Activated CD4-positive, alpha-beta memory T cell treated with anti-CD3 and anti-CD28 coated beads for 36 hours (primary cell): ENCODE measurements at regions of chrX and their contacts with region 1.

Region 1: GRCh38 chrX:110450050-110450449 is 91.4 kb downstream of the RTL9 start:
- DNase-seq: peak; percentile 65
- H3K4me3 Mint-ChIP-seq: no peak overlapping the region
- H3K27ac Mint-ChIP-seq: no peak overlapping the region
- H3K4me1 Mint-ChIP-seq: no peaks in the 10 kb centered on the region
- H3K27me3 Mint-ChIP-seq: peaks cover 5% of the 10 kb centered on the region

Region 2: DNA sequence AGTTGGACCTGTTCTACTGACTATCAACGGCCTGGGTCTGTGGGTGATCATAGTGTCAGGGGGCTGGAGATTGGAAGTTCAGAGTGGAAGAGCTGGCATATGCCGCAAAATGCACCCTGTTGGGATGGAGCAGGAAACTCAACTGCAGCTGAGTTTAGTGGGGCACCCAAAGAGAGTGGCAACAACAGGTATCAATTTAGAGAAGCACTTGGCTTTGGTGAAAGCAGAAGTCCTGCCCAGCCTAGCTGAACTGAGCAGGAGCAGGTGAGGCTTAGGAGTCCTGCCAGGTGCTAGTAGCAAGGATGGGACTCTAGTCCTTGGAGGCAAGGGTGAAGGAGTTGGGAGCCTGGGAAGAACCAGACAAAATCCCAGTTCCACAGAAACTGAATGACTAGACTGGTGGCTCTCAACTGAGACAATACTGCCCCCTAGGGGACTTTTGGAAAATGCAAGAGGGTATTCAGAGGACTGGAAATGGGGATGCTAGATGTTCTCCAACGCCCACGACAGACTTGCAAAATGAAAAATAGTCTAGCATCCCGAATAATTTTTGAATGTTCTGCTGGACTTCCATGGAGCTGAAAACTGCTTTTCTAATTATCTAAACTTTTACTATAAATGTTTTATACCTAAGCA is 42.0 kb before region 1 on chrX:
- CTCF ChIA-PET with region 1: no interaction called
- POLR2A ChIA-PET with region 1: no interaction called
- intact Hi-C with region 1: no loop called
- DNase-seq: peak; percentile 31
- H3K4me3 Mint-ChIP-seq: no peak overlapping the region
- H3K27ac Mint-ChIP-seq: no peak overlapping the region
- H3K4me1 Mint-ChIP-seq: peaks cover 3% of the 10 kb centered on the region
- H3K27me3 Mint-ChIP-seq: no peaks in the 10 kb centered on the region

Region 3: DNA sequence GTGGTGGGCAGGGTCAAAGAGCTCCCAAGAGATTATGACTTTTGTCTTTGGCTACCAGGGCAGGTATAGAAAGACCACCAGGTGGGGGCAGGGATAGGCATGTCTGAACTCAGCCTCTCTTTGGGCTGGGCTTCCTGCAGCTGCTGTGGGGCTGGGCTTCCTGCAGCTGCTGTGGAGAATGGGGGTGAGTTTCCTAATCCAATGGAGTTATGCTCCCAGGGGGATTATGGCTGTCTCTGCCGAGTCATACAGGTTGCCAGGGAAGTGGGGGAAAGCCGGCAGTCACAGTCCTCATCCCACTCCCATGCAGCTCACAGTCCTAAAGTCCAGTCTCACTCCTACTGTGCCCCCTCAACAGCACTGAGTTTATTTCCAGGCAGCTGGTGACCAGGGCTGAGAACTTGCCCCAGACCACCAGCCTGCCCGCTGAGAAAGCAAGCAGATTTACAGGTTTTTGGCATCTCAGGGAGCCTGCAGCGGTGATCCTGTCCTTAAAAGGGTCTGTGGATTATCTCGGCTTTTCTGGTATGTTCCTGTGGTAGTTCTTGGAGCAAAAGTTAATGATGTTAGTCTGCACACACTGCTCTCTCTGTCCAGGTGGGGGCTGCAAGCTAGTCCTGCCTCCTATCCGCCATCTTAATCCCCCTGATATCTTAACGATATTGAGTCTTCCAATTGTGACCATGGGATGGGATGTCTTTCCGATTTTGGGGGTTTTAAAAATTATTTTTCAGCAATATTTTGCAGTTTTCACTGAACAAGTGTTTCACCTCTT is 42.0 kb after region 1 on chrX:
- CTCF ChIA-PET with region 1: no interaction called
- POLR2A ChIA-PET with region 1: no interaction called
- intact Hi-C with region 1: no loop called
- DNase-seq: no peak
- H3K4me3 Mint-ChIP-seq: no peak overlapping the region
- H3K27ac Mint-ChIP-seq: no peak overlapping the region
- H3K4me1 Mint-ChIP-seq: no peaks in the 10 kb centered on the region
- H3K27me3 Mint-ChIP-seq: peaks cover 6% of the 10 kb centered on the region

Region 4: DNA sequence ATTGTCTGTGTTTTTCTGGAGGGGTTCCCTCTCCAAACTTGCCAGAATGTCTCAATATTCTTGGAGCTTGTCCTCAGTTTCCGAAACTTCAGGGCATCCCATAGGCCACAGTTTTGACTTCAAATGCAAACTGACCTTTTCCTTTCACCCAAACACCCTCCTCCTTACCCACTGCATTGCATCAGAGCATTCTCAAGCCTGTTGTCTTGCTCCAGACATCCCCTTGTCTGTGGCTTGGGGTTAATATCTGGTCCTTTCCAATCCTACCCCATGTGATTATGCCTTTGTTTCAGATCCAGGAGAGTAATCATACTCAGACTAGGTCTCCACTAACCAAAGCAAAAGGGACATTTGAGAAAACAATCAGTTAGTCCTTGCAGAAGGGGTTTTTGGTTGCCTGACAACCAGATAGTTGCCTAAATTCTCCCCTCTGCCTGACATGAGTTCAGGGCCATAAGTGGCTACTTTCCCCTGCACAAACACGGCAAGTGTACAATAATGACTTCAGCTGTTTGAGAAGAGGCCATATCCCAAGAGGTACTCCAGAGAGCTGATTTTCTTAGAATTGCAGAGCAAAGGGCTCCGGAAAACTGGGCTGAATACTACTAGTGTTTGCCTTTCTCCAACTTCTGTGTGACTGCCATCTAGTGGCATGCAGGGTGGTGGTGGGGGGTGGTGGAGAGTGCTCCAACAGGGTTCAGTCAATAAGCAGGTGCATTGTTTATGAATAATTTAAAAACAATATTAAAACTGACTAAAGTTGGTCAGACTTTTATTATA is 215.4 kb after region 1 on chrX:
- CTCF ChIA-PET with region 1: no interaction called
- POLR2A ChIA-PET with region 1: no interaction called
- intact Hi-C with region 1: loop called (anchors 1 kb)
- DNase-seq: peak; percentile 9
- H3K4me3 Mint-ChIP-seq: no peak overlapping the region
- H3K27ac Mint-ChIP-seq: no peak overlapping the region
- H3K4me1 Mint-ChIP-seq: no peaks in the 10 kb centered on the region
- H3K27me3 Mint-ChIP-seq: no peaks in the 10 kb centered on the region

Region 5: GRCh38 chrX:110847334-110847733 is 397.3 kb after region 1 on chrX:
- CTCF ChIA-PET with region 1: interaction called, 32 read pairs
- POLR2A ChIA-PET with region 1: no interaction called
- intact Hi-C with region 1: loop called (anchors 1 kb)
- DNase-seq: no peak
- H3K4me3 Mint-ChIP-seq: no peak overlapping the region
- H3K27ac Mint-ChIP-seq: no peak overlapping the region
- H3K4me1 Mint-ChIP-seq: no peaks in the 10 kb centered on the region
- H3K27me3 Mint-ChIP-seq: no peaks in the 10 kb centered on the region